GM12878 (cell line): ENCODE measurements at regions of chr10 and their contacts with region 1.

Region 1: DNA sequence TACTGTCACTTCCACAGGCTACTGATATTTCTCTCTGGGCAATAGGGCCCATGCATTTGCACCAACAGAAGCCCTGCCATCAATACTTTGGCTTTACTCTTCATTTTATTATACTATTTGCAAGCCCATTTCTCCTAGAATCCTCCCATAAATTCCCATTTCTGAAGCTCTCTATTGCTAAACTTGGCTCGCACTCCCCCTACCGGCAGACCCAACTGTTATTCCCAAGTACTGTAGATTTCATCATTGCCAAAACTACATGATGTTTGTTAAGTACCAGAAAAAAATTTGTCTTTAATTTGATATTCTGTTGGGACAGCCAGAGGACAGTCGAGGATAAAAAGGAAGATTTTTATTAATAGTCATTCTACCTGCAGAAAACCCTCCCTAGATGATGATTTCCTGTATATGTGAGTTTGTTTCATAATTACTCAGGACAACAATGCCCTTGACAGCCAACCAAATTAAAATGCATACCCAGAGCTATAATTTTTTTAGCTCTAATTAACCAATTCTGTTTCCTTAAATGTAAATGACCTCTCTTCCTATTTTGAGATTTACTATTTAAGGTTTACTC is 298.6 kb downstream of the REEP3 start:
- DNase-seq: no peak
- ATAC-seq: peak; percentile 41; the same call in 1 of the 3 replicates
- H3K4me3 ChIP-seq: no peak overlapping the region
- H3K27ac ChIP-seq: no peak overlapping the region
- H3K4me1 ChIP-seq: no peaks in the 10 kb centered on the region
- H3K27me3 ChIP-seq: no peaks in the 10 kb centered on the region; a peak in 1 of 4 replicates
- CTCF ChIP-seq: peak; percentile 58 to 75 (median 69)
- EP300 ChIP-seq: no peak
- POLR2A ChIP-seq: no peak
- RAD21 ChIP-seq: peak; percentile 55

Region 2: GRCh38 chr10:63798599-63799498 is 21.0 kb before region 1 on chr10:
- CTCF ChIA-PET with region 1: interaction called, 11 read pairs
- POLR2A ChIA-PET with region 1: no interaction called
- RAD21 ChIA-PET with region 1: no interaction called
- SMC1A ChIA-PET with region 1: no interaction called
- in situ Hi-C with region 1: no loop called
- intact Hi-C with region 1: no loop called
- DNase-seq: no peak
- ATAC-seq: no peak
- H3K4me3 ChIP-seq: no peak overlapping the region
- H3K27ac ChIP-seq: no peak overlapping the region
- H3K4me1 ChIP-seq: no peaks in the 10 kb centered on the region
- H3K27me3 ChIP-seq: peaks cover 0 to 2% of the 10 kb centered on the region in 2 experiments; a peak in 1 of 4 replicates
- CTCF ChIP-seq: no peak
- EP300 ChIP-seq: no peak
- POLR2A ChIP-seq: no peak
- RAD21 ChIP-seq: no peak